ENCODE measurements at regions of chr10 and their contacts with region 1.

Region 1: GRCh38 chr10:31603235-31604087 is 284.4 kb downstream of the ZEB1 start:
- DNase-seq: peak; percentile 95
- H3K4me3 ChIP-seq: peak overlapping the region; percentile 58 to 60
- H3K27ac ChIP-seq: peak overlapping the region; percentile 79 to 84
- H3K4me1 ChIP-seq: no peaks in the 10 kb centered on the region
- H3K27me3 ChIP-seq: no peaks in the 10 kb centered on the region
- CTCF ChIP-seq: peak in 2 of 4 experiments; percentile 26 to 39
- POLR2A ChIP-seq: peak; percentile 60

Region 2: GRCh38 chr10:31031558-31032257 is 571.8 kb before region 1 on chr10 and contains the start of gene ZNF438:
- intact Hi-C with region 1: loop called (anchors 5 kb)
- DNase-seq: peak; percentile 89
- H3K4me3 ChIP-seq: peak within 1 kb of the TSS; percentile 57 to 62
- H3K27ac ChIP-seq: peak within 1 kb of the TSS; percentile 97
- H3K4me1 ChIP-seq: no peaks in the 10 kb centered on the region
- H3K27me3 ChIP-seq: no peaks in the 10 kb centered on the region
- CTCF ChIP-seq: peak; percentile 31 to 80 (median 68)
- POLR2A ChIP-seq: peak; percentile 73
- total RNA-seq, gene ZNF438: 1.5 to 10.1 TPM

Region 3: GRCh38 chr10:31404640-31405039 is 198.8 kb before region 1 on chr10:
- intact Hi-C with region 1: no loop called
- DNase-seq: no peak
- H3K4me3 ChIP-seq: no peak overlapping the region
- H3K27ac ChIP-seq: no peak overlapping the region
- H3K4me1 ChIP-seq: no peaks in the 10 kb centered on the region
- H3K27me3 ChIP-seq: no peaks in the 10 kb centered on the region
- CTCF ChIP-seq: no peak
- POLR2A ChIP-seq: no peak

Measured in prostate gland (tissue), 2 donors.